Panc1 (cell line): ENCODE measurements at regions of chr7 and their contacts with region 1.

Region 1: DNA sequence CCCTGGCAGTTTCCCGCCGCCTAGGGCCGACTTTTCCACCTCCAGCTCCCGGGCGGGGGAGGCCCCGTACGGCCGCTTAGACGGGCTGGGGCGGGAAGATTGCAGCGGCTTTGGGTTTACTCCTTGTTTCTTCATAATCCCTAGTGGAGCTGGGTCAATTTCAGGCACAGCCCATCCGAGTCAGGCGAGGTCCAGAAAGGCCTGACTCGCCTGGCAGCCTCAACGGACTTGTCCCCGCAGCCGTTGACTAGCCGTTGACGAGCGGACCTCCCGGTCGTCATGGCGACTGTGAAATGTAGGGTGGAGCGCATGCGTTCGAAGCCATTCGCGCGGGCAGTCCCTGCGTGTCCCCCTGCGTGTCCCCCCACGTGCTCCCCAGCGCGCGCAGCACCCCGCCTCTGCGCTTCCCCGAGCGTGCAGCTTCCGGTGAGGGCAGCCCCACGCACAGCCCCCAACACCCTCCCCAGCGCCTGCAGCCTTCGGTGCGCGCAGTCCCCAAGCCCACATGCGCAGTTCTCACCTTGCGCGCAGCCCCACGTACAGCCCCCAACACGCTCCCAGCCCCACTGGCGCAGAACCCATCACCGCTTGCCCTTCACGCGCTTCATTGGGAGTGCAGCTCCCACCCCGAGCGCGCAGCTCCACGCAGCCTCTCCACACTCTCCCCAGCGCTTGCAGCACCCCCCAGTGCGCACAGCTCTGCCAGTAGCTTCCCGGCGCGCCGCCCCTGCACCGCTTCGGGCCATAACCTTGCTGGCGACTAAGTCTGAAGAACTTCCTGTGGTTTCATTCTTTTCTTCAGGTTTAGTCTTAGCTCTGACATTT is 67.8 kb downstream of the TBX20 start:
- DNase-seq: no peak
- ATAC-seq: peak; percentile 94
- H3K4me3 ChIP-seq: peak overlapping the region; percentile 63 to 74
- H3K27ac ChIP-seq: peak overlapping the region; percentile 62
- H3K4me1 ChIP-seq: no peaks in the 10 kb centered on the region
- H3K27me3 ChIP-seq: no peaks in the 10 kb centered on the region
- CTCF ChIP-seq: peak; percentile 32

Region 2: DNA sequence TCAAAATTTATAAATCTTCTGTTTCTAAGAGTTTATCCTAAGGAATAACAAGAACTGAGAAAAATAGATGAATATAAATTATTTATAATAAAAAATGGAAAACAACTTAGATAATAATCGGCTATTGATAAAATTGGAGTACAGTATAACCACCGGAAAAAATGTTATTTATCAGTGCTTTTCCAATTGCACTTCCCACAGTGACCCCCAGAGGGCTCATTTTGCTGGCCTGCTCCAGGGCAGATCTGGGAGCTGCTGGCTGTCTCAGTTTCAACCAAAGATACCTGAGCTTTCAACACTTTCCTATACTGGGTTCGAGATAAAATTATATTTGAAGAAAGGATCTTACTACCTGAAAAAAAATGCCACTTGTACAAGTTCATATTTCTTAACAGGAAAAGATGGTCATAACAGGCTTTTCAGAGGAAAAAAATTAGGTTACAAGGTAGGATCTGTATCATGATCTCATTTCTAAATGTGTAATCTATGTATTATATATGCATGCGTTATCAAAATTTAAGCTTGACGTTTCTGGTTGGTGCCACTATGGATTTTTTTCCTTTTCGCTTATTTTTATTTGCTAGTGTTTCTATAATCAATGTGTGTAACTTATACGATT is 362.4 kb before region 1 on chr7:
- CTCF ChIA-PET with region 1: no interaction called
- POLR2A ChIA-PET with region 1: no interaction called
- in situ Hi-C with region 1: no loop called
- intact Hi-C with region 1: no loop called
- DNase-seq: peak; percentile 36
- ATAC-seq: peak; percentile 79; the same call in 1 of the 2 replicates
- H3K4me3 ChIP-seq: no peak overlapping the region
- H3K27ac ChIP-seq: no peak overlapping the region
- H3K4me1 ChIP-seq: no peaks in the 10 kb centered on the region
- H3K27me3 ChIP-seq: no peaks in the 10 kb centered on the region
- CTCF ChIP-seq: peak; percentile 97

Region 3: DNA sequence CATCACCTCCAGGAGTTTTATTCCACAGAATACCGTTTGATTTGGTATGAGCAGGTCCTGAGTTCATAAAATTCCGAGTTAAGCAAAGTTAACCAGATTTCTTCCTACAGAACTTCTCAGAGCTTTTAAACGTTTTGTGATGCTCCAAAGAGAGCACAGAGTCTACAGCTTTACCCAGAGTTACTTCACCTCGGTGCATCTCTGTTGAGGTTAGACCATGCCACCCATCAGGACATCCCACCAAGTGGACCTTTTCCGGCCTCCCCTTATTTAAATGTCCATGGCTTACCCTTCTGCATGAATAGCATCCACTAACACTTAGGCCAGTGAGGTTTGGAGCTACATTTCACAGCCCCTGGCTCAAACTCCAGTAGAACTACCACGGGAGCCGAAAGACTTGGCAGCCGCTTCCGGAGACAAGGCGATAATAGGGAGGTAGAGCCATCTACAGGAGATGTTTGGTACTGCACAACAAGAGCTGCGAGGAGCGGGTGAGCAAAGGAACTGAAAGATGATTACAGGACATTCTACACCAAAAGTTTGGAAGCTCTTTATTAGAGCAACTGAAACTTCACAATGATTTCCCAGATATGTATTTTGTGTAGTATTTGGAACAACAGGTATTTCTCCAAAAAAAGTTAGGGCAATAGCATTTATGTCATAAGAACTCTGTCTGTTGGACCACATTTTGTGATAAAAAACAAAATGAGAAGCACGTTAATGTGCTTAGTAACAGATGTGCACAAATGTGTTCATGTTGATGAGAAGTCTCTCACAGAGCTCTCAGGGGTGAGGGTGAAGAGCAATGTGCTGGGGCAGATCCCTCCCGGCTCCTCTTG is 334.1 kb after region 1 on chr7:
- CTCF ChIA-PET with region 1: no interaction called
- POLR2A ChIA-PET with region 1: no interaction called
- in situ Hi-C with region 1: no loop called
- intact Hi-C with region 1: loop called (anchors 5 kb)
- DNase-seq: peak; percentile 60
- ATAC-seq: peak; percentile 89
- H3K4me3 ChIP-seq: no peak overlapping the region
- H3K27ac ChIP-seq: no peak overlapping the region
- H3K4me1 ChIP-seq: no peaks in the 10 kb centered on the region
- H3K27me3 ChIP-seq: peaks cover 35% of the 10 kb centered on the region
- CTCF ChIP-seq: peak; percentile 96

Region 4: GRCh38 chr7:35537067-35538023 is 351.2 kb after region 1 on chr7:
- CTCF ChIA-PET with region 1: interaction called, 5 read pairs
- POLR2A ChIA-PET with region 1: no interaction called
- in situ Hi-C with region 1: no loop called
- intact Hi-C with region 1: loop called (anchors 5 kb)
- DNase-seq: peak; percentile 50
- ATAC-seq: peak; percentile 99
- H3K4me3 ChIP-seq: peak overlapping the region; percentile 20 to 41; a peak in 3 of 4 replicates
- H3K27ac ChIP-seq: no peak overlapping the region
- H3K4me1 ChIP-seq: no peaks in the 10 kb centered on the region
- H3K27me3 ChIP-seq: peaks cover 26% of the 10 kb centered on the region
- CTCF ChIP-seq: peak; percentile 97